ENCODE measurements at regions of chr17 and their contacts with region 1.

Region 1: GRCh38 chr17:75109407-75110233 is at the start of gene ARMC7:
- DNase-seq: no peak
- ATAC-seq: peak; percentile 78
- H3K4me3 ChIP-seq: peak within 1 kb of the TSS; percentile 83 to 88
- H3K27ac ChIP-seq: peak within 1 kb of the TSS; percentile 88
- H3K4me1 ChIP-seq: peaks cover 42% of the 10 kb centered on the region
- H3K27me3 ChIP-seq: no peaks in the 10 kb centered on the region
- CTCF ChIP-seq: no peak
- total RNA-seq, gene ARMC7: 48.7 TPM

Region 2: DNA sequence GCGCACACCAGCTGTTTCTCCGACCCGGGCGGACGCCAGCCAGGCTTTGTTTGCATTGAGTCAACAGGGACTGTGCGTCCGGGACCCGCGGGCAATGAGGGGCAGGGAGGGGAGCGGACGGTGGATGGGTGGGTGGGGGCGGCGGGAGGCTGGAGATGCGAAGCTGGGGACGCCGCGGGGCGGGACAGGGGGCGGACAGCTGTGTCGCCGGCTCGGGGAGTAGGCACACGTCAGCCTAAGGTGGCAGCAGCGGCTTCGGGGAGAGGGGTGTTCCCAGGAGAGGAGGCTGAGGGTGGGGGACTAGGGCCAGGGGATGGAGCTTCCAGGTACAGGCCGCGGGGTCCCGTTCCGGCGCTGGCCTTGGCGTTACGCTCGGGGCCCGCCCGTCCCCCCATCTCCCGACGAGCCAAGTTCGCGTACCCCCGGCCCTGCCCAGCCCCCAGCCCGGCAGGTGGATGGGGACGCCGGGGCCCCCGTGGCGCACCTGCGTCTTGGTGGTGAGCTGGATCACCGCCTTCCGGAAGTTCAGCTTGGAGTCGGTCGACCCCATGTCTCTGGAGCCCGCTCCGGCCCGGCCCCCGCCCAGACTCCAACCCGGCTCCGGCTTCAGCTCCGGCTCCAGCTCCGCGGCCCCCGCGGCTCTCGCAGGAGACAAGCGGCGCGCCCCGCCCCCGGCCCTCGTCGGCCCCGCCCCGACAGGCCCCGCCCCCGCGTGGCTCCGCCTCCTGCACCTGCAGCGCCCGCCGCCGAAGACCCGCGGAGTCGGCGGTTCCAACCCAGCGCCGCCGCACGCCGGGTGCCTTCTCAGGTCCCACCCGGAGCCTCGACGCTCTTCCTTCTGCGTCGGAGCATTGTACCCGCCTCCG is 137.3 kb before region 1 on chr17 and contains the start of gene HID1:
- CTCF ChIA-PET with region 1: no interaction called
- POLR2A ChIA-PET with region 1: no interaction called
- in situ Hi-C with region 1: no loop called
- intact Hi-C with region 1: loop called (anchors 10 kb)
- DNase-seq: no peak
- ATAC-seq: peak; percentile 87
- H3K4me3 ChIP-seq: peak within 1 kb of the TSS; percentile 52 to 58
- H3K27ac ChIP-seq: no peak within 1 kb of the TSS
- H3K4me1 ChIP-seq: peaks cover 4% of the 10 kb centered on the region; the same call in 1 of the 2 replicates
- H3K27me3 ChIP-seq: no peaks in the 10 kb centered on the region
- CTCF ChIP-seq: no peak
- total RNA-seq, gene HID1: 10.9 TPM

Region 3: DNA sequence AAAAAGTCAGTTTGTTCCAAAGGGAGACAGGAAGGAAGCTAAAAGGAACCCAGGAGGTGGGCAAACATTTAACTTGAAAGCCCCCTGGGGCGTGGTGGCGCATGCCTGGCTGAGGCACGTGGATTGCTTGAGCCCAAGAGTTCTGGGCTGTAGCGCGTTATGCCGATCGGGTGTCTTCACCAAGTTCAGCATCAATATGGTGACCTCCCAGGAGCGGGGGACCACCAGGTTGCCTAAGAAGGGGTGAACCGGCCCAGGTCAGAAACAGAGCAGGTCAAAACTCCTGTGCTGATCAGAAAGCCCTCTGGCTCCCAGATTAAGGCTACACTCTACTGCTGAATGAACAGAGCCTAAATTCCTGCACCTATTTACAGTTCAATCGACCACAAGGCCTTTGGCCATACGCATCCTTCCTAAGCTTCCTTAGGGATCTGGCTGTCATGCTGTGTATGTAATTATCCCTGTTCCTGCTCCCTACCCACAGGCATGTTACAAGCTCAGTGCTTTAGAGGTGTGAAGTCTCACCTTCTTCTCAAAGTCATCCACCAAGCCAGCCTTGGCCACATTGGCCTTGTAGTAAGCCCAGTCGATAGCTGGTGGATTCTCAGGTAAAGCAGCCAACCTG is 67.9 kb before region 1 on chr17:
- CTCF ChIA-PET with region 1: no interaction called
- POLR2A ChIA-PET with region 1: no interaction called
- in situ Hi-C with region 1: no loop called
- intact Hi-C with region 1: no loop called
- DNase-seq: no peak
- ATAC-seq: no peak
- H3K4me3 ChIP-seq: no peak overlapping the region
- H3K27ac ChIP-seq: no peak overlapping the region
- H3K4me1 ChIP-seq: peaks cover 3% of the 10 kb centered on the region; the same call in 1 of the 2 replicates
- H3K27me3 ChIP-seq: no peaks in the 10 kb centered on the region
- CTCF ChIP-seq: no peak

Region 4: GRCh38 chr17:75069783-75070182 is 39.8 kb before region 1 on chr17:
- CTCF ChIA-PET with region 1: interaction called, 13 read pairs
- POLR2A ChIA-PET with region 1: no interaction called
- in situ Hi-C with region 1: no loop called
- intact Hi-C with region 1: loop called (anchors 2 kb)
- DNase-seq: no peak
- ATAC-seq: peak; percentile 79
- H3K4me3 ChIP-seq: no peak overlapping the region
- H3K27ac ChIP-seq: no peak overlapping the region
- H3K4me1 ChIP-seq: no peaks in the 10 kb centered on the region
- H3K27me3 ChIP-seq: no peaks in the 10 kb centered on the region
- CTCF ChIP-seq: no peak

Region 5: GRCh38 chr17:75131280-75132017 is 21.8 kb after region 1 on chr17 and contains the start of gene NT5C:
- CTCF ChIA-PET with region 1: interaction called, 12 read pairs
- POLR2A ChIA-PET with region 1: interaction called, 4 read pairs
- in situ Hi-C with region 1: no loop called
- intact Hi-C with region 1: no loop called
- DNase-seq: no peak
- ATAC-seq: peak; percentile 87
- H3K4me3 ChIP-seq: peak within 1 kb of the TSS; percentile 72 to 83
- H3K27ac ChIP-seq: peak within 1 kb of the TSS; percentile 93
- H3K4me1 ChIP-seq: peaks cover 24% of the 10 kb centered on the region
- H3K27me3 ChIP-seq: no peaks in the 10 kb centered on the region
- CTCF ChIP-seq: peak; percentile 89
- total RNA-seq, gene NT5C: 63.4 TPM

Region 6: GRCh38 chr17:75205037-75205792 is 95.6 kb after region 1 on chr17 and contains the start of gene NUP85:
- CTCF ChIA-PET with region 1: interaction called, 21 read pairs
- POLR2A ChIA-PET with region 1: no interaction called
- in situ Hi-C with region 1: no loop called
- intact Hi-C with region 1: no loop called
- DNase-seq: peak; percentile 72
- ATAC-seq: peak; percentile 93
- H3K4me3 ChIP-seq: peak within 1 kb of the TSS; percentile 89 to 95
- H3K27ac ChIP-seq: peak within 1 kb of the TSS; percentile 95
- H3K4me1 ChIP-seq: no peaks in the 10 kb centered on the region
- H3K27me3 ChIP-seq: no peaks in the 10 kb centered on the region
- CTCF ChIP-seq: no peak
- total RNA-seq, gene NUP85: 141 TPM